ENCODE measurements at regions of chr15 and their contacts with region 1.

Region 1: GRCh38 chr15:62324382-62324781 is 159.3 kb upstream of the C2CD4B start:
- DNase-seq: no peak
- H3K4me3 ChIP-seq: no peak overlapping the region
- H3K4me3 Mint-ChIP-seq: no peak overlapping the region
- H3K27ac ChIP-seq: no peak overlapping the region
- H3K27ac Mint-ChIP-seq: no peak overlapping the region
- H3K4me1 ChIP-seq: no peaks in the 10 kb centered on the region
- H3K4me1 Mint-ChIP-seq: no peaks in the 10 kb centered on the region
- H3K27me3 ChIP-seq: peaks cover 0 to 6% of the 10 kb centered on the region in 2 donors
- H3K27me3 Mint-ChIP-seq: peaks cover 9 to 23% (median 11%) of the 10 kb centered on the region in 3 donors
- CTCF ChIP-seq: no peak

Region 2: GRCh38 chr15:62269504-62269903 is 54.9 kb before region 1 on chr15:
- intact Hi-C with region 1: loop called in 1 of 2 experiments (anchors 10 kb)
- DNase-seq: no peak
- H3K4me3 ChIP-seq: no peak overlapping the region
- H3K4me3 Mint-ChIP-seq: no peak overlapping the region
- H3K27ac ChIP-seq: no peak overlapping the region
- H3K27ac Mint-ChIP-seq: no peak overlapping the region
- H3K4me1 ChIP-seq: no peaks in the 10 kb centered on the region
- H3K4me1 Mint-ChIP-seq: no peaks in the 10 kb centered on the region
- H3K27me3 ChIP-seq: no peaks in the 10 kb centered on the region
- H3K27me3 Mint-ChIP-seq: peaks cover 1 to 6% (median 4%) of the 10 kb centered on the region in 3 donors
- CTCF ChIP-seq: no peak

Measured in CD14-positive monocyte (primary cell).